ENCODE measurements at regions of chr4 and their contacts with region 1.

Region 1: GRCh38 chr4:10204401-10205058 is 87.9 kb upstream of the WDR1 start:
- DNase-seq: no peak
- H3K4me3 ChIP-seq: no peak overlapping the region
- H3K27ac ChIP-seq: no peak overlapping the region
- H3K4me1 ChIP-seq: no peaks in the 10 kb centered on the region
- H3K27me3 ChIP-seq: peaks cover 0 to 12% (median 0%) of the 10 kb centered on the region in 7 donors
- CTCF ChIP-seq: no peak
- POLR2A ChIP-seq: no peak

Region 2: GRCh38 chr4:10253755-10254154 is 49.2 kb after region 1 on chr4:
- intact Hi-C with region 1: loop called (anchors 10 kb)
- DNase-seq: no peak
- H3K4me3 ChIP-seq: no peak overlapping the region
- H3K27ac ChIP-seq: no peak overlapping the region
- H3K4me1 ChIP-seq: no peaks in the 10 kb centered on the region
- H3K27me3 ChIP-seq: peaks cover 0 to 11% (median 0%) of the 10 kb centered on the region in 7 donors
- CTCF ChIP-seq: no peak
- POLR2A ChIP-seq: no peak

Region 3: GRCh38 chr4:10470505-10470904 is 266.0 kb after region 1 on chr4:
- intact Hi-C with region 1: no loop called
- DNase-seq: no peak
- H3K4me3 ChIP-seq: no peak overlapping the region
- H3K27ac ChIP-seq: no peak overlapping the region
- H3K4me1 ChIP-seq: no peaks in the 10 kb centered on the region
- H3K27me3 ChIP-seq: peaks cover 0 to 6% (median 0%) of the 10 kb centered on the region in 7 donors
- CTCF ChIP-seq: no peak
- POLR2A ChIP-seq: no peak

Region 4: DNA sequence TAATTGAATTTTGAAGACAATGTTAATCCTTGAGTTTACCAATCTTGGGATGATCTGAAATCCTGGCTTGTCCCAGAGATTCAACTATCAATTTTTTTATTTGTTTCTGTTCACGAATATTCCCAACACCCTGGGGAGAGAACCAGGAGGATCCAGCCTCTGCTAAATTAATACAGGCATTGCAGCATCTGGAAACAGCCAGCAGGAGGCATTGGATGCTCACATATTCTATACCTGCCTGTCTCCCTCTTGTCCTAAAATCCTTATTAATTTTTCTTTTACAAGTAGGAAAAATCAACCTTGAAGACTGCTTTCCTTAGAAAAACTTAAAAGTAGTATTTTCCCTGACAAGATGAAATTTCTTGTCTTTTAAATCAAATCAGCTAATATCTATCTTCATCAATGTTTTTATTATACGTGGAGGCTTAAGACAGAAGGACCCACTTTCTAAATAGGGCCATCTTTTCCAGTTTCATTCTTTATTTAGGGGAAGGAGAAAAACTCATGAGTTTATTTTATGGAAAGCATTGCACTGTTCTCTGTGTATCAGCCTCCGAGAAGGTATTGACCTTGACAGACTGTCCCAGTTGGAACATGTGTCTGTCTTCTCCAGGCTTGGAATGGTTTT is 377.6 kb after region 1 on chr4:
- intact Hi-C with region 1: no loop called
- DNase-seq: no peak
- H3K4me3 ChIP-seq: no peak overlapping the region
- H3K27ac ChIP-seq: no peak overlapping the region
- H3K4me1 ChIP-seq: peaks cover 4 to 33% (median 17%) of the 10 kb centered on the region in 6 donors
- H3K27me3 ChIP-seq: no peaks in the 10 kb centered on the region
- CTCF ChIP-seq: peak; percentile 48 to 82 (median 73)
- POLR2A ChIP-seq: no peak

Measured in spleen (tissue), 13 donors.